ENCODE measurements at regions of chr5 and their contacts with region 1.

Region 1: GRCh38 chr5:40736103-40736875 is 19.5 kb downstream of the TTC33 start:
- DNase-seq: peak; percentile 84
- H3K4me3 ChIP-seq: no peak overlapping the region
- H3K27ac ChIP-seq: peak overlapping the region; percentile 84
- H3K4me1 ChIP-seq: peaks cover 36% of the 10 kb centered on the region
- H3K27me3 ChIP-seq: no peaks in the 10 kb centered on the region
- CTCF ChIP-seq: peak; percentile 40 to 50
- POLR2A ChIP-seq: no peak

Region 2: DNA sequence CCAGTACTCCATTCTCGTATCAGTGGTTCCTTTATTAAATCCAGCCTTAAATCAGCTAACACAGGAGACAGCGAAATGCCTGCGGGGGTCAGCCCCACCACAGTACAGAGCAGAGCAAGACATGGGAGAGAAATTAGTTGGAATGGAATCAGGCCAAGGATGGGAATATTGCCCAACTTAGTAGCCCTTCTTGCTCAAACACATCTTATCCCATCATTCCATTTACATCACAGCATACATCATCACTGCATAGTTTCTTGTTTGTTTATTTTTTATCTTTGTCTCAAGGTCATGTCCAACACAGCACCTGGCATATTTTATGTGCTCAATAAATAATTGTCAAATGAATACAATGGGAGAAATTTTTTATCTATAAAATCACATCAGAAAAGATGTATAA is 1277.2 kb before region 1 on chr5:
- CTCF ChIA-PET with region 1: no interaction called
- POLR2A ChIA-PET with region 1: no interaction called
- dilution Hi-C with region 1: no loop called
- intact Hi-C with region 1: no loop called
- DNase-seq: no peak
- H3K4me3 ChIP-seq: no peak overlapping the region
- H3K27ac ChIP-seq: no peak overlapping the region
- H3K4me1 ChIP-seq: no peaks in the 10 kb centered on the region
- H3K27me3 ChIP-seq: no peaks in the 10 kb centered on the region
- CTCF ChIP-seq: no peak
- POLR2A ChIP-seq: no peak

Region 3: GRCh38 chr5:39599721-39600431 is 1136.4 kb before region 1 on chr5:
- CTCF ChIA-PET with region 1: interaction called, 5 read pairs
- POLR2A ChIA-PET with region 1: no interaction called
- dilution Hi-C with region 1: no loop called
- intact Hi-C with region 1: loop called (anchors 5 kb)
- DNase-seq: peak; percentile 43
- H3K4me3 ChIP-seq: no peak overlapping the region
- H3K27ac ChIP-seq: no peak overlapping the region
- H3K4me1 ChIP-seq: no peaks in the 10 kb centered on the region
- H3K27me3 ChIP-seq: no peaks in the 10 kb centered on the region
- CTCF ChIP-seq: peak; percentile 21 to 28
- POLR2A ChIP-seq: no peak

Region 4: GRCh38 chr5:40165794-40166728 is 570.2 kb before region 1 on chr5:
- CTCF ChIA-PET with region 1: interaction called, 22 read pairs
- POLR2A ChIA-PET with region 1: no interaction called
- dilution Hi-C with region 1: no loop called
- intact Hi-C with region 1: loop called (anchors 5 kb)
- DNase-seq: peak; percentile 44
- H3K4me3 ChIP-seq: no peak overlapping the region
- H3K27ac ChIP-seq: no peak overlapping the region
- H3K4me1 ChIP-seq: peaks cover 6% of the 10 kb centered on the region
- H3K27me3 ChIP-seq: no peaks in the 10 kb centered on the region
- CTCF ChIP-seq: peak in 1 of 2 donors; percentile 10
- POLR2A ChIP-seq: no peak

Region 5: GRCh38 chr5:40410231-40410861 is 325.9 kb before region 1 on chr5:
- CTCF ChIA-PET with region 1: no interaction called
- POLR2A ChIA-PET with region 1: no interaction called
- dilution Hi-C with region 1: no loop called
- intact Hi-C with region 1: loop called (anchors 1 kb)
- DNase-seq: peak; percentile 97
- H3K4me3 ChIP-seq: peak overlapping the region in 1 of 3 experiments; percentile 24
- H3K27ac ChIP-seq: peak overlapping the region; percentile 81
- H3K4me1 ChIP-seq: peaks cover 24% of the 10 kb centered on the region
- H3K27me3 ChIP-seq: no peaks in the 10 kb centered on the region
- CTCF ChIP-seq: no peak
- POLR2A ChIP-seq: peak; percentile 13

Region 6: GRCh38 chr5:40716000-40716399 is 20.3 kb before region 1 on chr5:
- CTCF ChIA-PET with region 1: interaction called, 12 read pairs
- POLR2A ChIA-PET with region 1: no interaction called
- dilution Hi-C with region 1: no loop called
- intact Hi-C with region 1: no loop called
- DNase-seq: peak; percentile 45
- H3K4me3 ChIP-seq: no peak overlapping the region
- H3K27ac ChIP-seq: no peak overlapping the region
- H3K4me1 ChIP-seq: peaks cover 7% of the 10 kb centered on the region
- H3K27me3 ChIP-seq: no peaks in the 10 kb centered on the region
- CTCF ChIP-seq: peak in 1 of 2 donors; percentile 19
- POLR2A ChIP-seq: no peak

Region 7: DNA sequence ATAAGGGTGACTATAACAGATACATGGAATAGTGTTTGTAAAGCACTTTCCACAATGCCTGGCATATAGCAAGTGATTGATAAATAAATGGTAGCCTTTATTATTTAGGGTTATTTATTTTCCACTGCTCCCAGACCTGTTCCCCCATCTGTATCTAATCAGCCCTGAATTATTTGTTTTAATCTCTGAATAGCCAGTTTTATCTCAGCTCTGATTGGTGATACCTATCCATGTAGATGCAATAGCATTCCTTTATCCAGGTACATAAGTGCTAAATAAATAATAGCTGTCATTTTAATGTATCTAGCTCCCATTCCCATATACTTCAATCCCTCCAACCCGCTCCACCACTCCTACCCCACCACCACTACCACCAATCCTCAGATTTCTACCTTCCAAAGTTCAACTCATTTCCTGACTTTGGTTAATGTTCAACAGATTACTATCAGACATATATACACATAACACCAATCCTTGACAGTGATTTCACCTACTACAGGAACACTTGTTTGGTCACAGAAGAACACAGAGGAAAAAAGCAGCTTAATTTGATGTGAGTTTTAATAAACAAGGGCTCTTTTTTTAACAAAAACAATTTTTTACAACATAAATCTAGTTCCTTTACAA is 47.9 kb after region 1 on chr5:
- CTCF ChIA-PET with region 1: no interaction called
- POLR2A ChIA-PET with region 1: no interaction called
- dilution Hi-C with region 1: no loop called
- intact Hi-C with region 1: no loop called
- DNase-seq: no peak
- H3K4me3 ChIP-seq: no peak overlapping the region
- H3K27ac ChIP-seq: no peak overlapping the region
- H3K4me1 ChIP-seq: peaks cover 6% of the 10 kb centered on the region
- H3K27me3 ChIP-seq: no peaks in the 10 kb centered on the region
- CTCF ChIP-seq: no peak
- POLR2A ChIP-seq: no peak

Measured in endothelial cell of umbilical vein (primary cell).